Activated CD4-positive, alpha-beta T cell treated with anti-CD3 and anti-CD28 coated beads for 36 hours (primary cell): ENCODE measurements at regions of chr9 and their contacts with region 1.

Region 1: DNA sequence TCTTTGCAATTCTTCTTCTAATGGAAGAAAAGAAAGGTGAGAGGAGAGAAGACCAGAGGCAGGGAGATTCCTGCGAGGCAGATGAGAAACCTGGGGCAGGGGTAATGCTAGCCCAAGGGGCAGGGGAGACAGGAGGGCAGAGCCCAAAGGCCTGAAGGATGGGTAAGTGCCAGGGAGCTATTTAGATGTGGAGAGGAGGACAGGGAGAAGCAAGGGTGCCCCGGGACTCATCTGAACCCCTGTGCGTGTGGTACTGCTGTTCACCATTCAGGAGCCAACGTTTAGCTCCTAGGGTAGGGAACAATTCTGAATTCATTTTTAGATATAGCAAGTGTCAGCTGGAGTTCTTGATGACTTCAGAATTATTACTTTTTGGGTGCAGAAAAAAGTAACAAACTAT is 122.7 kb upstream of the ALDH1B1 start:
- DNase-seq: no peak
- ATAC-seq: no peak
- H3K4me3 Mint-ChIP-seq: no peak overlapping the region
- H3K27ac Mint-ChIP-seq: no peak overlapping the region
- H3K4me1 Mint-ChIP-seq: no peaks in the 10 kb centered on the region
- H3K27me3 Mint-ChIP-seq: peaks cover 4% of the 10 kb centered on the region

Region 2: DNA sequence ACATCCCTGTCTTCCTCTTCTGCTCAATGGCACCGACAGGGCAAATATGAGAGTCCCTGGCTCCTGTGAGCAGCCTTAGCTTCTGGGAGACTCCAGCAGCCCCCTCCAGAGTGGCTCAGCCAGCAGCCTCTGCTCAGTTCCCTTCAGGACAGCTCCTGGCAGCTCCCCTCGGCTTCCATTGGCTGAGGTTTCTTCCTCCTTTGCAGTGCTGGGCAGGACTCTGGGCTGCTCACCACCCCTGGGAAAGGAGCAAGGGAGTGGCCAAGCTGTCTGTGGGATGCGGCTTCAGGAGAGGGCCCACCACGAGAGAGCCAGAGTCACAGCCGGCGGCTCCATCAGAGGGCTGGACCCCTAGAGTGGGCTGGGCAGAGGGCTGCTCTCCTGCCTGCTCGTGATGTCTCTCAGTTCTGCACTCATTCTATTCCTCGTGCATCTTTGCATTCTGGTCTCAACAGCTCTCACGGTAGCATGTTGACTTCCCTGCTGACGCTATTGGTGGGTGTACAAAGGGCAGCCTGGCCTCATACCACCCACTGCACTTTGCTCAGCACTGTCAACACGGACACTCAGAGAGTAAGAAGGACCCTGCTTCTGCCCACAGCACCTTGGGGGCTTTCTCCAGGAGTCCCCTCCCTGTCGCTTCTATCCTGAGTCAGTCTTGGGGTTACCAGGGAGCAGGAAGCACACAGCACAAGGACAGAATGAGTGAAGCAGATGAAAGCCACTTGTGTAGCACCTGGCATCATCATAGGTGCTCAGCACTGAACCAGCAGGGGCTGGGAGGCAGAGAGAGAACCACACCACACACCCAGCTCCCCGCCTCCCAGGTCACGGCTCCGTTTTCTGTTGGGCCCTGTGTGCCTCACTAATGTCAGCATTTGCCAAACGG is 41.9 kb after region 1 on chr9:
- CTCF ChIA-PET with region 1: no interaction called
- POLR2A ChIA-PET with region 1: no interaction called
- intact Hi-C with region 1: loop called in 1 of 2 experiments (anchors 5 kb)
- DNase-seq: no peak
- ATAC-seq: no peak
- H3K4me3 Mint-ChIP-seq: no peak overlapping the region
- H3K27ac Mint-ChIP-seq: no peak overlapping the region
- H3K4me1 Mint-ChIP-seq: no peaks in the 10 kb centered on the region
- H3K27me3 Mint-ChIP-seq: peaks cover 8% of the 10 kb centered on the region